Ovary (tissue), 10 donors: ENCODE measurements at regions of chr2 and their contacts with region 1.

Region 1: DNA sequence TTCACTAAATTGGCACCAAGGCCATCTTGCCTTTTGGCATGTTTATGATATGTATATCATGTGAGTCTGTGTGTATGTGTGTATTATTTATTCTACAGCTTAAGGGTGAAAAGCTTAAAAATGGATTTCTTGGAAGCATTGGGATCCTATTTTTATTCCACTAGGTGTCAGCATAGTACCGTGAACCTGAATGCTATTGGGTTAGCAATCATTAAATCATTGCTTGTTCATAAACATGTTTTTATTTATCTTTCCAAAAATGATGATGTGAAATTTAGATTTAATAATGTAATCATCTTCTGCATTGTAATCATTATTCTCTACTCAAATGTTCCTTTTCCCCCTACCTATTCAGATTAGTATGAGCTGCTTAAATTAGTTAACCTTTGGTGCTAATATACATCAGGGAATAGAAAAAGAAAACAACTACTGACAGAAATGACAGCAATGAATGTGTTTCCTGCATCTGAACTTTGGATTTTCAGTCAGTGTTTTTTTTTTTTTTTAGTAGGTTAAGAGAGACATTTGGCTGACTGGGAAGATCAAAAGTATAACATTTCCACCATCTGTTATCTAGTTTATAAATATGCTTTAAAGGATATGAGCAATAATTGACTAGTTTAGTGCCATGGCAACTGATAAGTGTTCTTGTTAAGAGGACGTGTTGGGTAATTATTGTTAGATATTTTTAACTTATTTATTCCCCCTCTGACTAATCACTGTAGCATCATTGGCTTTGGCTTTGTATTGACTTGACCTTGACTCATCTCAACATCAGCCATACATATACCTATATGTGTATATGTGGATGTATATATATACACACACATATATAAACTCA is 14.1 kb upstream of the ZSWIM2 start:
- DNase-seq: no peak
- H3K4me3 ChIP-seq: no peak overlapping the region
- H3K27ac ChIP-seq: no peak overlapping the region
- H3K4me1 ChIP-seq: no peaks in the 10 kb centered on the region
- H3K27me3 ChIP-seq: no peaks in the 10 kb centered on the region
- CTCF ChIP-seq: peak; percentile 47 to 87 (median 57)
- EP300 ChIP-seq: no peak
- POLR2A ChIP-seq: no peak

Region 2: DNA sequence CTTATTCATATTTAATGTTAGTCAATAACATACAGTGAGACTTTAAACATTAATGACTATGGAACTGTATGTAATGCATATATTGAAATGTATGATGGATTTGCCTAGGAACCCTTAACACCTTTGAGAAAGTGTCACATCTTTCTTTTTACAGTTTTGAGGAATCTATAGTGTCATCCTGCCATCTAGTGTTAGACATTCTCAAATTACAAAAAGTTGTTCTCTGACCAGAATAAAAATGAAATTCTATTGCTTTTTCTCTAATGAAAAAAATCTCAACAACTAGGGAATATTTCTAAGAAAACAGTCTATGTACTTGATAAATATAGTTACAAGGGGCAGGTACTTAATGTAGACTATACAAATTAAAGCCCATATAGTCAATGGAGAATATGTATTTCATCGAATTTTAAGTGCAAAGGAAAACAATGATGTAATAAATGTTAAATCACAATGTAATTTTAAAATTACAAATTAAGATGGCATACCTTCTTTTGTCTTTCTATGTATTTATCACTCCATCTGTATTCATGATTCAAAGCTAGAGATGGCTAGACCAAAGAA is 590.1 kb after region 1 on chr2:
- intact Hi-C with region 1: loop called (anchors 5 to 10 kb)
- DNase-seq: no peak
- H3K4me3 ChIP-seq: no peak overlapping the region
- H3K27ac ChIP-seq: no peak overlapping the region
- H3K4me1 ChIP-seq: no peaks in the 10 kb centered on the region
- H3K27me3 ChIP-seq: no peaks in the 10 kb centered on the region
- CTCF ChIP-seq: peak; percentile 22 to 53 (median 39)
- EP300 ChIP-seq: no peak
- POLR2A ChIP-seq: no peak

Region 3: GRCh38 chr2:187459256-187459655 is 596.2 kb after region 1 on chr2:
- intact Hi-C with region 1: loop called (anchors 5 to 10 kb)
- DNase-seq: no peak
- H3K4me3 ChIP-seq: no peak overlapping the region
- H3K27ac ChIP-seq: no peak overlapping the region
- H3K4me1 ChIP-seq: no peaks in the 10 kb centered on the region
- H3K27me3 ChIP-seq: no peaks in the 10 kb centered on the region
- CTCF ChIP-seq: no peak
- EP300 ChIP-seq: no peak
- POLR2A ChIP-seq: no peak